Activated naive CD4-positive, alpha-beta T cell treated with anti-CD3 and anti-CD28 coated beads for 36 hours (primary cell): ENCODE measurements at regions of chr11 and their contacts with region 1.

Region 1: DNA sequence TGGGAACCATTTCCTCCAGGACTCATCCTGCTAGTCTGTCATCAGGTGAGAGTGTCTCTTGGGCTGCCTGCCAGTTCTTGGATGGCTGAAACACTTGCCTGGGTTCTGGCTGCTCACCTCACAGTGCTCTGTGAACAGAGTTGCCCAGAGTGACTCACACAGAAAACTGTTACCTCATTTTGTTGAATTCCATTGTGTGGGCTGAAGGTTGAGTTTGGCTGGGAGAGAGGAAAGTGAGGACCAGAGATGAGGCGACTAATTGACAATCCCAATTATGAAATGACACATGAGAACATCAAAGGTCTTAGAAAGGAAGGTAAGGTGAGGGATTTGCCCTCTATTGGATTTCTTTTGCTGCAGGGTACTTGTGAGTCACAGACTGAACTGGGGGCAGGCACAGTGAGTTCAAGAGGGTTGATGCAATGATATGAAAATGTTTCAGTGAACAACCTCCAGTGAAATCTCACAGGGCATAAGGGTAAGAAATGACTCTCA is 20.2 kb upstream of the CALCB start:
- DNase-seq: peak; percentile 75
- H3K4me3 Mint-ChIP-seq: no peak overlapping the region
- H3K27ac Mint-ChIP-seq: peak overlapping the region; percentile 83
- H3K4me1 Mint-ChIP-seq: peaks cover 26% of the 10 kb centered on the region
- H3K27me3 Mint-ChIP-seq: peaks cover 2% of the 10 kb centered on the region

Region 2: DNA sequence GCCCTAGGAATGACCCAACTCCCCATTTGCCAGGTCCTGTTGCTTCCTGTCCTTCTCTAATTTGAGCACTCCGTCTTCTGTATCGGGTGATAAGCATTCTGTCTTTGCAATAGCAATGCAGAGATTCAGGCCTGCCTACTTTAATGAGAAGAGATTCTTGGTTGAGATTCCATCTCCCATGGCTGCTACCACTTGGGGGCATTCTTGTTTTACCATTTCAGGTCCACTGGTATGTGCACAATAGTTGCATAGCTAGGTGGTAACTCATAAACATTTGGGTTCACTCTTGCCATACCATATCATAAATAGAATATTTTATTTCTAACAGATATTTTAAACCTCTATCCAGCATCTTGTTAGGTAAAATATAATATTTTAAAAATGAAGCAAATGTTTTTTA is 14.3 kb before region 1 on chr11:
- CTCF ChIA-PET with region 1: interaction called, 11 read pairs
- intact Hi-C with region 1: no loop called
- DNase-seq: peak; percentile 57
- H3K4me3 Mint-ChIP-seq: no peak overlapping the region
- H3K27ac Mint-ChIP-seq: no peak overlapping the region
- H3K4me1 Mint-ChIP-seq: no peaks in the 10 kb centered on the region
- H3K27me3 Mint-ChIP-seq: no peaks in the 10 kb centered on the region